Breast epithelium (tissue), 4 donors: ENCODE measurements at regions of chr7 and their contacts with region 1.

Region 1: DNA sequence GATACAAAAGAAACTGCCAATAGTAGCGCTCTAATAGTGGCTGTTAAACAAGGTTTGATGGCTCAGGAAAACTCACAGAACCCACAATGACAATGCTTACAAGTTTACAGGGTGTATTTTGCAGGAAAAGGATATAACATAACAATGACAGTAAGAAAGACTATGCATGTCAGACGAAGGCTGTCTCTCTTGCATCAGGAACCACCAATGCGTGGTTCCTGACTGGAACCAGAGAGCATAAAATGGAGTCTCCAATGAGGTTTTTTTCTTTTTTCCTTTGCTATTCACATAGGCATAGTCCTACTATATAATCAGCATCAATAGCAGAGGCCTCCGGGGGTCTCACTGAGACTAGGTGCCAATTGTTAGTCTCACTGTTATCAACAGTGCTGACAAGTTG is 120.4 kb upstream of the STEAP1 start:
- DNase-seq: no peak
- H3K4me3 ChIP-seq: no peak overlapping the region
- H3K27ac ChIP-seq: no peak overlapping the region
- H3K4me1 ChIP-seq: no peaks in the 10 kb centered on the region
- H3K27me3 ChIP-seq: no peaks in the 10 kb centered on the region
- CTCF ChIP-seq: no peak
- POLR2A ChIP-seq: no peak

Region 2: DNA sequence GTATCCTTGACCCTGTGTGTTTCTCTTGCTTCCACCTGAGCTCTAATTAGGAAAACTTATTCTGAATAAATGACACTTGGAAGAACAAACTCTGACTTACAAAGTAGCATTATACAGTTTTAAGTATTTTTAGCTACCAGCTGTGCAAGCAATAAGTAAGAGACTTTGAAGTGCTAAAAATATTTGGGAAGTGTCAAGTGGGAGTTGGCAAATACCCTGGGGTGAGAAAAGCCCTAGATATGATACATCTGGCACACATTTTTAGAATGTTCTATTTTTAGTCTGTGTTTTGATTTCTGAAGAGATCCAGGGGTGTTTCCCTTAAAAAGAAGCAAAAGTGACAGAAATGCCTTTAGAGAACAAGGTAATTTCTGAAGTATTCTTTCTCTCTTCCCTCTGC is 1105.6 kb before region 1 on chr7:
- intact Hi-C with region 1: loop called (anchors 5 kb)
- DNase-seq: no peak
- H3K4me3 ChIP-seq: no peak overlapping the region
- H3K27ac ChIP-seq: no peak overlapping the region
- H3K4me1 ChIP-seq: no peaks in the 10 kb centered on the region
- H3K27me3 ChIP-seq: no peaks in the 10 kb centered on the region
- CTCF ChIP-seq: no peak
- POLR2A ChIP-seq: no peak

Region 3: DNA sequence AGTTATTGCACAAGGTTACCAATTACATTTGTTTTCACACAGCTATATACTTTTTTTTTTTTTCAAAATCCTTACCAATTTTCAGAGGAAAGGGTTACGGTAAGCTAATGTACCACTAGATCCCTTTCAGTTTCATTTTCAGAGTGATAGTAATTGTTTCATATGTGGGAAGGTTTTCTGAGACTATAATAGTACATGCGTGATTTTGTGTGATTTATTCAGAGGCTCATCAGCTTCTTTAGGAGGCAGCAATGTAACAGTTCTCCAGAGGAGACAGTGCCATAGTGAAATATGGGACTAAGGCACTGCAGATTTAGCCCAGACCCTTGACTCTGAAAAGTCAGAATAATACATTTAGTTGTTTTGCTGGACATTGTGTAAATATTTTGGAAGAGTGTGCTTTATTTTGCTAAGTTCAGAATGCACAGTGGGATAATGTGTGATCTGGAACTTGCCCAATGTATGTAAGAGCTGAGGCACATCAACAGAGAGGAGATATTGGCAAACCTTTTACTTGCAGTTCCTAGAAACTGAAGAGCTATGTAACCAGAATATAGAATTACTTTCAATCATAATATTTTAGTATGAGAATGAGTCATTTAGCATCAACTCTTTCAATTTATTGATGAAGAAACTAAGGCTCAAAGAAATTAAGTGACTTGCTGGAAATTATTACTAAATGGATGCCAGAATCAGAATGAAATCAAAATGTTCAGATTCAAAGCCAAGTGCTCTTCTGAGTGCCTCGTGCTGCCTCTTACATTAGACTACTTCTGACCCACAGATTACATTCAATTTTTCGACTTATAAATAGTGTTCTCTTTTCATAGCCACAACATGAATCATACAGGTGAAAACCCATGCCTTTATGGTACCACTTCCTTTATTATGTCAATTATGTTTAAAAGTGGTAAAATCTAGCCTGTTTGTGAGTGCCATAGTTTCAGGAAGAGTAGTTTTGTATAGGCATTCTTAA is 1030.6 kb before region 1 on chr7:
- intact Hi-C with region 1: no loop called
- DNase-seq: no peak
- H3K4me3 ChIP-seq: peak overlapping the region; percentile 17 to 51 (median 27)
- H3K27ac ChIP-seq: no peak overlapping the region
- H3K4me1 ChIP-seq: no peaks in the 10 kb centered on the region
- H3K27me3 ChIP-seq: no peaks in the 10 kb centered on the region
- CTCF ChIP-seq: no peak
- POLR2A ChIP-seq: no peak